ENCODE measurements at regions of chr1 and their contacts with region 1.

Region 1: GRCh38 chr1:205528887-205529825 is 24.7 kb downstream of the CDK18 start:
- DNase-seq: peak; percentile 89

Region 2: DNA sequence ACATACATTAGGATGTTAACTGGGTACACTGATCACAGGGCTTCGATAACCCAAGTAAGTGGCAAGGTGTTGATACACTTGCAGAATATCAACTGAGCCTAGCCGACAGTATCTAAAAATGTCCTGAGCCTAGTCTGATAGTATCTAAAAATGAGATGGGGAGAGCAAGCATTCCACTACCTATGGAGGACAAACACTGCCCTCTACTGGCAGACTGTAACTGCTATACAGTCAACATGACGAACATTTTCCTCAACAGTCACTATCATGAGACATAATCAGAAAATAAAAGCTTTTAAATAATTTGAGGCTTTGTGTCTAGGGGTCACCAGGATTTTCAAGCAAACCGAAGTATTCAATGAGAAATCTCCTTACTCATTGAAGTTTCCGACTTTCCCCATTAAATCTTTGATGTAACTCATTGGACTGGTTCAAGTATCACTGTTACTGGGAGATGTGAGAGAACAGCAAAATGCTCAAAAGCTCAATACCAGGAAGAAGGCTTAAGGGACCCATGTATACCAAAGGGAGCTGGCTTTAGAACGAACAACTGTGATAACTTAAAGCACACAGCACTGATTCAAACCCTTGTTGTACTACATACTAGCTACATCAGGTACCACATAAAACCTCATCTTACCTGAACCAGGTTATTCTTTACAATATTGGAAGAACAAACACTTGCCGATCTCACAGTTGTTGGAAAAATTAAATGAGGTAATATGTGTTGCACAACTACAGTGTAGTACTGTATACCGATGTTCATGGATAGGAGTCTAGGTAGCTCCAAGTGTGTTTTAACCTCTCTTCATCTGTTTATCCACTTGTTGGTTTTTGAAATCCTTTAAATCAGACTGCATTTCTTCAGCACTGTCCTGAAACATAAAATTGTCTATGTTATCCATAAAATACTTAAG is 182.2 kb after region 1 on chr1:
- intact Hi-C with region 1: loop called (anchors 5 kb)
- DNase-seq: no peak